ENCODE measurements at regions of chr12 and their contacts with region 1.

Region 1: GRCh38 chr12:88580051-88580871 is at the start of gene KITLG:
- DNase-seq: peak; percentile 90
- H3K4me3 ChIP-seq: peak within 1 kb of the TSS; percentile 96 to 99 (median 98)
- H3K27ac ChIP-seq: peak within 1 kb of the TSS; percentile 69
- H3K4me1 ChIP-seq: peaks cover 22% of the 10 kb centered on the region
- H3K27me3 ChIP-seq: no peaks in the 10 kb centered on the region
- CTCF ChIP-seq: peak; percentile 13 to 63
- total RNA-seq, gene KITLG: 26.2 to 45.3 TPM

Region 2: DNA sequence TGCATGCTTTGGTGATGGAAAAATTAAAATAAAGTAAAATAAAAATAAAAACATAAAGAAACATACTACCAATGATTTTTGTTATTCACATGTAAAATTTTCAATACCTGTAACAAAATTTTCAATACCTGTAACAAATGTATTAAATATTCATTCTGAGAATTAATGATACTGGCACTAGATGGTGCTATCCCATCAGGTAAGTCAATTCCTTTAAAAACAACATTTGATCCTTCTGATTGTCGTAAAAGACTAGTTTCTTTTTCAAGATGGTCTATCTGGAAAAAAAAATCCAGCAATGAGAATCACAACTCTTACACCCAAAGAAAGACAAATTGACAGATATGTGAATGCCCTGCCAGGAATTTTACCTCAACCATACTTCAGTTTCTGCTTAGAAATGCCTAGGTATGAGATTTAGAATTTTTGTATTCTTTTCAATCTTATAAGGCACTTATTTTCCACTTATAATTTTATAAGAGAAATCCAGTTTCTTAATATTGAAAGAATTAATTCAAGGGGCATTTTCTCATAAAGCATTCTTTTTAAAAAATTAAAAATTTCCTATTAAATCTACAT is 469.1 kb before region 1 on chr12:
- CTCF ChIA-PET with region 1: no interaction called
- dilution Hi-C with region 1: no loop called
- in situ Hi-C with region 1: no loop called
- intact Hi-C with region 1: loop called (anchors 1 kb)
- DNase-seq: peak; percentile 48
- H3K4me3 ChIP-seq: peak overlapping the region in 2 of 3 experiments; percentile 36 to 44
- H3K27ac ChIP-seq: peak overlapping the region; percentile 57
- H3K4me1 ChIP-seq: peaks cover 4% of the 10 kb centered on the region
- H3K27me3 ChIP-seq: no peaks in the 10 kb centered on the region
- CTCF ChIP-seq: peak; percentile 49 to 51

Region 3: GRCh38 chr12:88519802-88520435 is 60.3 kb before region 1 on chr12:
- CTCF ChIA-PET with region 1: no interaction called
- dilution Hi-C with region 1: no loop called
- in situ Hi-C with region 1: no loop called
- intact Hi-C with region 1: loop called (anchors 5 kb)
- DNase-seq: peak; percentile 70
- H3K4me3 ChIP-seq: peak overlapping the region in 1 of 3 experiments; percentile 12
- H3K27ac ChIP-seq: peak overlapping the region; percentile 83
- H3K4me1 ChIP-seq: peaks cover 13% of the 10 kb centered on the region
- H3K27me3 ChIP-seq: no peaks in the 10 kb centered on the region
- CTCF ChIP-seq: no peak

Region 4: DNA sequence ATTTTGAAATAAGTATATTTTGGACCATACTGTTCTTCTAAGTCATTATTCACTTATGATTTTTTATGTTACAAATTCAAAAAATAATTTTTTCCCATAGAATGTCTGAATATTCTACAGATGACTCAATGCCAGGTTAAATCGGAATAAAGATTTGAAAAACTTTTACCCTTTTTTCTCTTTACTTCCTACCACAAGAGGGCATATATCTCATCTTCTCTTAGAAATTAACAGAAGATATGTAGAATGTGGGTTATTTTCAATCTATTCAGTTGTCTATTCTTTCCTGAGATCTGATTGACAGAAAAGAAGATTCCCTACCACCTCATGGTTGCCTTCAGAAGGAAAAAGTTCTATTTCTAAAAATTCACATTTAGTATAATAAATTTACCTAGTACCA is 53.1 kb after region 1 on chr12:
- CTCF ChIA-PET with region 1: interaction called, 3 read pairs
- dilution Hi-C with region 1: no loop called
- in situ Hi-C with region 1: no loop called
- intact Hi-C with region 1: loop called (anchors 1 kb)
- DNase-seq: no peak
- H3K4me3 ChIP-seq: no peak overlapping the region
- H3K27ac ChIP-seq: no peak overlapping the region
- H3K4me1 ChIP-seq: no peaks in the 10 kb centered on the region
- H3K27me3 ChIP-seq: no peaks in the 10 kb centered on the region
- CTCF ChIP-seq: peak; percentile 18 to 47

Region 5: GRCh38 chr12:88854260-88854659 is 274.0 kb after region 1 on chr12:
- CTCF ChIA-PET with region 1: no interaction called
- dilution Hi-C with region 1: no loop called
- in situ Hi-C with region 1: no loop called
- intact Hi-C with region 1: loop called (anchors 1 kb)
- DNase-seq: peak; percentile 90
- H3K4me3 ChIP-seq: no peak overlapping the region
- H3K27ac ChIP-seq: peak overlapping the region; percentile 58
- H3K4me1 ChIP-seq: peaks cover 13% of the 10 kb centered on the region
- H3K27me3 ChIP-seq: no peaks in the 10 kb centered on the region
- CTCF ChIP-seq: no peak